ENCODE measurements at regions of chr20 and their contacts with region 1.

Region 1: DNA sequence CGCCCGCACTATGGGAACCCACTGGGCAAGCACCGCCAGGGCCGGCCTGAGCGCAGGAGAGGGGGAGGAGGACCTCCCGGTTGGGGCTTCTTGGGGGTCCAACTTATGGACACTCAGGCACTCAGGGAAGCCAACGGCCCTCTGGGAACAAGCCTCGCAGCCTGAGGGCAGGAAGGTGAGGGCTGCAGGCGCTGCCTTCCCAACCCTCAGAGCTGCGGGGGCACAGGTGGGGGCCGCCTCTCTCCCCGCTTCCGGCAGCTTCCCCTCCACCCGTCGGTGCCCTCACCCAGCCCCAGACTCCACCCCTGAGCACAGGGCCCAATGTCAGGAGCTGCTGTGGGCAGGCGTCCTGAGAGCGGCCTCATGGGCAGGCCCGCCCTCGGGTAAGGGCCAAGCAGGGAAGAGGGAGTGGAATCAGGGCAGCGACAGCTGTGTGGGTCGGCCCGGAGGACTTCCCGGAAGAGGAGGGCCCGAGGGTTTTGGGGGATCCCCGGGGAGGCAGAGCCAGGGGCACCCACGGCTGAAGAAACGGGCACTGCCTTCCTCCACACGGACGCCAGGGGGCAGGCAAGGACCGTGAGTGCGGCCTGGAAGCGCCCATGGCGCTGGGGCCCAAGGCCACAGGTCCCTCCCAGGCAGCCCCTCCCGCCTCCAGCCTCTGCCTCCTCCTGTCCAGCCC is 488 bp upstream of the PTK6 start:
- DNase-seq: peak; percentile 98
- ATAC-seq: peak; percentile 94
- H3K4me3 Mint-ChIP-seq: peak overlapping the region; percentile 51
- H3K27ac Mint-ChIP-seq: peak overlapping the region; percentile 83
- H3K4me1 Mint-ChIP-seq: peaks cover 16% of the 10 kb centered on the region
- H3K27me3 Mint-ChIP-seq: no peaks in the 10 kb centered on the region

Region 2: GRCh38 chr20:63178889-63179686 is 358.6 kb before region 1 on chr20:
- CTCF ChIA-PET with region 1: no interaction called
- DNase-seq: peak; percentile 71
- ATAC-seq: peak; percentile 64
- H3K4me3 Mint-ChIP-seq: no peak overlapping the region
- H3K27ac Mint-ChIP-seq: peak overlapping the region; percentile 40
- H3K4me1 Mint-ChIP-seq: peaks cover 2% of the 10 kb centered on the region
- H3K27me3 Mint-ChIP-seq: peaks cover 56% of the 10 kb centered on the region

Region 3: GRCh38 chr20:63520504-63520933 is 17.1 kb before region 1 on chr20 and contains the start of gene PPDPF:
- CTCF ChIA-PET with region 1: interaction called, 18 read pairs
- DNase-seq: peak; percentile 87
- ATAC-seq: peak; percentile 82
- H3K4me3 Mint-ChIP-seq: peak within 1 kb of the TSS; percentile 75
- H3K27ac Mint-ChIP-seq: peak within 1 kb of the TSS; percentile 74
- H3K4me1 Mint-ChIP-seq: peaks cover 10% of the 10 kb centered on the region
- H3K27me3 Mint-ChIP-seq: no peaks in the 10 kb centered on the region
- total RNA-seq, gene PPDPF: 138 to 237 TPM

Region 4: DNA sequence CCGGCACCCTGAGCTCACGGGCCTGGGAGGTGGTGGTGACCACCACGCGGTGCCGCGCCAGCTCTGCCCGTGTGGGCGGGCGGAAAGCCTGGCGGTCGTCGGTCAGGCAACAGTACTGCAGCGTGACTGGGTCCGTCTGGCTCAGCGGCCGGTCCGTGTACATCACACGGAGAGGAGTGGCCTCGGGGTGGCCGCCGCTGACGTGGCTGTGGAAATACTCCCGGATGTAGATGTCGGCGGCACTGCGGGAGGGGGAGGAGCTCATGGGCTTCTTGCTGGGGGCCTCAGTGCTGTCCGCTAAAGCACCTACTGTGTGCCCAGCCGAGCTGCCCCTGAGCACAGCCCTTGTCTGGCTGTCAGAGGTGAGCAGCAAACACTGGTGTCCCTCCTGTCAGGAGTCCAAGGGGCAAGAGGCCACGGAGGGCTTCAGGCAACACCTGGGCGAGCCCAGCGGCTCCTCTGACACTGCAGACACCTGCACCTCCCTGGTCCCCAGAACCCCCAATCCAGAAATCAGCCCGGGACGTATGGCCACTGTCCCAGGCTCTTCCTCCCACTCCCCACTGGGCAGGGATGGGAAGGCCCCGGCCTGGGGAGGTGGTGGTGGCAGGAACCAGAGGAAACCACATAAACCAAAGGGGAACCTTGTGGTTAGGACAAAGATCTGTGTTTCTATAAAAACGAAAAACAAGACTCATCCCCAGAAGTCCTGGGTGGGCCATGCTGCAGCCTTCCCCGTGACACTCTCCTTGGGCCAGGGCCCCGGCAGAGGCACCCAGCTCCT is 29.9 kb after region 1 on chr20:
- CTCF ChIA-PET with region 1: interaction called, 21 read pairs
- DNase-seq: peak; percentile 83
- ATAC-seq: peak; percentile 71
- H3K4me3 Mint-ChIP-seq: peak overlapping the region; percentile 49
- H3K27ac Mint-ChIP-seq: peak overlapping the region; percentile 79
- H3K4me1 Mint-ChIP-seq: peaks cover 34% of the 10 kb centered on the region
- H3K27me3 Mint-ChIP-seq: no peaks in the 10 kb centered on the region

Region 5: GRCh38 chr20:63602321-63602720 is 64.7 kb after region 1 on chr20:
- CTCF ChIA-PET with region 1: no interaction called
- DNase-seq: no peak
- ATAC-seq: peak; percentile 33
- H3K4me3 Mint-ChIP-seq: no peak overlapping the region
- H3K27ac Mint-ChIP-seq: no peak overlapping the region
- H3K4me1 Mint-ChIP-seq: peaks cover 19% of the 10 kb centered on the region
- H3K27me3 Mint-ChIP-seq: no peaks in the 10 kb centered on the region

Region 6: GRCh38 chr20:63641792-63642544 is 104.3 kb after region 1 on chr20:
- CTCF ChIA-PET with region 1: interaction called, 19 read pairs
- DNase-seq: peak; percentile 97
- ATAC-seq: peak; percentile 63
- H3K4me3 Mint-ChIP-seq: peak overlapping the region; percentile 64
- H3K27ac Mint-ChIP-seq: peak overlapping the region; percentile 80
- H3K4me1 Mint-ChIP-seq: peaks cover 27% of the 10 kb centered on the region
- H3K27me3 Mint-ChIP-seq: no peaks in the 10 kb centered on the region

Region 7: GRCh38 chr20:63782051-63782471 is 244.4 kb after region 1 on chr20:
- CTCF ChIA-PET with region 1: interaction called, 10 read pairs
- DNase-seq: peak; percentile 80
- ATAC-seq: peak; percentile 89
- H3K4me3 Mint-ChIP-seq: no peak overlapping the region
- H3K27ac Mint-ChIP-seq: no peak overlapping the region
- H3K4me1 Mint-ChIP-seq: peaks cover 18% of the 10 kb centered on the region
- H3K27me3 Mint-ChIP-seq: no peaks in the 10 kb centered on the region

Region 8: DNA sequence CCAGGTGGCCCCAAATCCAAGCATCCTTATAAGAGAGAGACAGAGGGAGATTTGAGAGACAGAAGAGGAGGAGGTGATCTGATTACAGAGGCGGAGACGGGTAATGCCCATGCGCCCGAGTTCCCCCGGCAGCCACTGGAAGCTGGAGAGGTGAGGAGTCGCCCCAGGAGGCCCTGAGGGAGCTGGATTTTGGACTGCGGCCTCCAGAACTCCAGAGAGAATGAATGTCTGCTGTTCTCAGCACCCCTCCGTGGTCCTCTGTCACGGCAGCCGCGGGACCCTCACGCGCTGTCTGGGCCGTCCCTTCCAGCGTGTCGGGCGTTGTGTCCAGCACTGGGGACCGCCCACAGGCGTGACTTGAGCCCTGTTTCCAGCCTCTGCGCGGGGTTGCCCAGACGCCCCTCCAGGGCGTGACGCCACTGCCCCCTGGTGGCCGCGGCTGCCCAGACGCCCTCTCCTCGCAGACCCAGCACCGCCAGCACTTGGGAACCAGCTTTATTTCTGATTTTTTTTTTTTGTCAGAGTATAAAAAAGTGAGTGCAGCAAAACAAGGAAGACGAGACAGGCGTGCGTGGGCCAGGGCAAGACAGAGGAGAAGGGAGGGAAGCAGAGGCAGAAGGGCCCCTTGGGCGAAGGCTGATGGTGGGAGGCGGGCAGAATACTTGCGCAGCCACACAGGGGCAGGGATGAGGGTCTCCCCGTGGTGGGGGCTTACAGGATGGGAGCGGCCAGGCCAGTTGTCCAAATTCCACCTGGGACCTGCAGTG is 436.2 kb after region 1 on chr20:
- CTCF ChIA-PET with region 1: interaction called, 13 read pairs
- DNase-seq: peak; percentile 80
- ATAC-seq: peak; percentile 40
- H3K4me3 Mint-ChIP-seq: no peak overlapping the region
- H3K27ac Mint-ChIP-seq: peak overlapping the region; percentile 70
- H3K4me1 Mint-ChIP-seq: peaks cover 42% of the 10 kb centered on the region
- H3K27me3 Mint-ChIP-seq: peaks cover 3% of the 10 kb centered on the region